CD4-positive, alpha-beta memory T cell (primary cell): ENCODE measurements at regions of chr3 and their contacts with region 1.

Region 1: GRCh38 chr3:126668450-126669401 is 13.8 kb upstream of the TXNRD3 start:
- DNase-seq: no peak
- H3K4me3 ChIP-seq: no peak overlapping the region
- H3K4me3 Mint-ChIP-seq: no peak overlapping the region
- H3K27ac ChIP-seq: no peak overlapping the region
- H3K27ac Mint-ChIP-seq: no peak overlapping the region
- H3K4me1 ChIP-seq: no peaks in the 10 kb centered on the region
- H3K4me1 Mint-ChIP-seq: peaks cover 0 to 2% (median 0%) of the 10 kb centered on the region in 4 donors
- H3K27me3 ChIP-seq: no peaks in the 10 kb centered on the region
- H3K27me3 Mint-ChIP-seq: peaks cover 2 to 10% of the 10 kb centered on the region in 2 donors

Region 2: DNA sequence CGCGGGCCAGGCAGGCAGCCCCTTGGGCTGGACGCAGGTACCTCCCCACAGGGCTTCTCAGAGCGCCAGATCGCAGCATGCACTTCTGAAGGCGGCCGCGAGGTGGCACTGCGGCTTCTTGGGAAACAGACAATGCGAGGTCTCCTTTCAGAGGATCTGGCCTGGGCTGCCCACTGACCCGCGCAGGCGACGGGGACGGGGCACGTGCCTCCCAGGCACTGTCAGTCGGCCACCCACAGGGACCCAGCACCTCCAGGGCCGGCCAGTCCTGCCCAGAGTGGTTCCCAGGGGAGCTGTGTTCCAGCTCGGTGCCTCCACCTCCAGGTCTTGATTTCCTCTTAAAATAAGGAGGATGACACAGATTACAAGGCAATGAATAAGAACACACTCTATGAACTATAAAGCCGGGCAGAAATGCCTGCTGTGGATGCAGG is 10.6 kb after region 1 on chr3:
- CTCF ChIA-PET with region 1: interaction called, 15 read pairs
- POLR2A ChIA-PET with region 1: no interaction called
- intact Hi-C with region 1: no loop called
- DNase-seq: peak; percentile 58 to 73 (median 65)
- H3K4me3 ChIP-seq: no peak overlapping the region
- H3K4me3 Mint-ChIP-seq: peak overlapping the region in 5 of 8 donors; percentile 5 to 71 (median 55)
- H3K27ac ChIP-seq: no peak overlapping the region
- H3K27ac Mint-ChIP-seq: no peak overlapping the region
- H3K4me1 ChIP-seq: peaks cover 3% of the 10 kb centered on the region
- H3K4me1 Mint-ChIP-seq: peaks cover 0 to 8% (median 3%) of the 10 kb centered on the region in 4 donors
- H3K27me3 ChIP-seq: no peaks in the 10 kb centered on the region
- H3K27me3 Mint-ChIP-seq: peaks cover 8 to 28% of the 10 kb centered on the region in 2 donors

Region 3: DNA sequence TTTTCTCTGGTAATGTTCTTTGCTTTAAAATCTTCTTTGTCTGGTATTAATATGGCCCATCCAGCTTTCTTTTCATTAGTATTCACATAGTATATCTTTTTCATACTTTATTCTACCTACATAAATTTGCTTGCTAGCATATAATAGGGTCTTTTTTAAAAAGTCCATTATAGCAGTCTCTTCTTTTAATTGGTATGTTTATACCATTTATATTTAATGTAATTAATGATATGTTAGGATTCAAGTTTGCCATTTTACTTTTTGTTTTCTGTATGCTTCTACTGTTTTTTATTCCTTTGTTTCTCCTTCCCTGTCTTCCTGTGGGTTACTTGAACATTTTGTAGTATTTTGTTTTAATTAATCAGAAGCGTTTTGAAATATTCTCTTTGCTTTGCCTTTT is 124.3 kb after region 1 on chr3:
- CTCF ChIA-PET with region 1: no interaction called
- POLR2A ChIA-PET with region 1: no interaction called
- intact Hi-C with region 1: no loop called
- DNase-seq: no peak
- H3K4me3 ChIP-seq: no peak overlapping the region
- H3K4me3 Mint-ChIP-seq: no peak overlapping the region
- H3K27ac ChIP-seq: no peak overlapping the region
- H3K27ac Mint-ChIP-seq: no peak overlapping the region
- H3K4me1 ChIP-seq: no peaks in the 10 kb centered on the region
- H3K4me1 Mint-ChIP-seq: peaks cover 0 to 4% (median 1%) of the 10 kb centered on the region in 4 donors
- H3K27me3 ChIP-seq: no peaks in the 10 kb centered on the region
- H3K27me3 Mint-ChIP-seq: no peaks in the 10 kb centered on the region